ENCODE measurements at regions of chr22 and their contacts with region 1.

Region 1: GRCh38 chr22:17785185-17786184 is 11.2 kb upstream of the BID start:
- DNase-seq: peak; percentile 76
- ATAC-seq: peak; percentile 47
- H3K4me3 ChIP-seq: no peak overlapping the region
- H3K4me3 Mint-ChIP-seq: no peak overlapping the region
- H3K27ac ChIP-seq: peak overlapping the region in 1 of 2 donors; percentile 50
- H3K27ac Mint-ChIP-seq: peak overlapping the region; percentile 37
- H3K4me1 ChIP-seq: peaks cover 11 to 16% of the 10 kb centered on the region in 2 donors
- H3K4me1 Mint-ChIP-seq: peaks cover 22% of the 10 kb centered on the region
- H3K27me3 ChIP-seq: no peaks in the 10 kb centered on the region
- H3K27me3 Mint-ChIP-seq: no peaks in the 10 kb centered on the region
- CTCF ChIP-seq: peak; percentile 77

Region 2: GRCh38 chr22:17712441-17712840 is 73.0 kb before region 1 on chr22:
- CTCF ChIA-PET with region 1: no interaction called
- POLR2A ChIA-PET with region 1: no interaction called
- intact Hi-C with region 1: no loop called
- DNase-seq: no peak
- ATAC-seq: no peak
- H3K4me3 ChIP-seq: no peak overlapping the region
- H3K4me3 Mint-ChIP-seq: no peak overlapping the region
- H3K27ac ChIP-seq: no peak overlapping the region
- H3K27ac Mint-ChIP-seq: no peak overlapping the region
- H3K4me1 ChIP-seq: no peaks in the 10 kb centered on the region
- H3K4me1 Mint-ChIP-seq: peaks cover 4% of the 10 kb centered on the region
- H3K27me3 ChIP-seq: no peaks in the 10 kb centered on the region
- H3K27me3 Mint-ChIP-seq: no peaks in the 10 kb centered on the region
- CTCF ChIP-seq: no peak

Region 3: DNA sequence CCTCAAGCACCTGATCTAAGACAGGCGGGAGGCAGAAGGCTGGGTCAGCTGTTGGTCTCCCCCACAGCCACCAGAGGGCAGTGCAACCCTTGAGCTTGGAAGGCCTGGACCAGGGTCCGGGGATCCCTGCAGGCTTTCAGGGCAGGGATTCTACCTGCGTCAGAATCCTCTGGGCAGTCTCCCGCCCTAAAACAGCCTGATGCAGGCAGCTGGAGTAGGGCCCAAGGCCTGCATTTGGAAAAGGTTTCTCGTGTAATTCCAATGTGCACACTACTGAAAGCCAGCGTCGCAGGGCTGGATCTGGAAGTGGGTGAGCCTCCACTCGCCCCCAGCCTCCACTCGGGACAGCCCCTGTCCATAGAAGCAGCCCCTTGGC is 43.0 kb before region 1 on chr22:
- CTCF ChIA-PET with region 1: interaction called, 109 read pairs
- POLR2A ChIA-PET with region 1: interaction called, 3 read pairs
- intact Hi-C with region 1: loop called (anchors 1 kb)
- DNase-seq: peak; percentile 85
- ATAC-seq: peak; percentile 94
- H3K4me3 ChIP-seq: no peak overlapping the region
- H3K4me3 Mint-ChIP-seq: no peak overlapping the region
- H3K27ac ChIP-seq: no peak overlapping the region
- H3K27ac Mint-ChIP-seq: peak overlapping the region; percentile 26
- H3K4me1 ChIP-seq: peaks cover 0 to 6% of the 10 kb centered on the region in 2 donors
- H3K4me1 Mint-ChIP-seq: peaks cover 8% of the 10 kb centered on the region
- H3K27me3 ChIP-seq: no peaks in the 10 kb centered on the region
- H3K27me3 Mint-ChIP-seq: no peaks in the 10 kb centered on the region
- CTCF ChIP-seq: peak; percentile 75

Region 4: DNA sequence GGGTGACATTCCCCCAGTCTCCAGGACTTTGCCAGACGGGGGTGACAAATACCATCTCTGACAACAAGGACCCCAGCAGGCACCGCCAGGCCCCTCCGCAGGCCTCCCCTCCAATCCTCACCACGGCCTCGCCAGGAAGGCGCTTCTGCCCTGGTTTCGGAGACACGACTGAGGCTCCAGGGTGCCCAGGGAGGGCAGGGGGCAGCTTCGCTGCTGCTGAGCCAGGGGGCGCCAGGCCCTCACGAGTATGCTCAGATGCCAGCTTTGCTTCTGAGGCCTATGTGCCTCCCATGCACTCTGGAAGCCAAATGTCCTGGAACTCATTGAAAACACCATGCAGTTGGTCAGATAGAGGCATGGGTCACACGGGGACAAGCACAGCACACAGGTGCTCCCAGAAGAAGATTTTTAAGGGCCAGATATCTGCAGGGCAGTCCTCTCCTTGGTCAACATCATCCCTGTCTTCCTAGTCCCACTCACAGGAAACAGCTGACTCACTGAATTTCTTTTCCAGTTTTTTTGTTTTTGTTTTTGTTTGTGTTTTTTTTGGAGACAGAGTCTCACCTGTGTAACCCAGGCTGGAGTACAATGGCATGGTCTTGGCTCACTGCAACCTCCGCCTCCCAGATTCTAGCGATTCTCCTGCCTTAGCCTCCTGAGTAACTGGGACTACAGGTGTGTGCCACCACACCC is 31.1 kb before region 1 on chr22:
- CTCF ChIA-PET with region 1: interaction called, 30 read pairs
- POLR2A ChIA-PET with region 1: no interaction called
- intact Hi-C with region 1: loop called (anchors 1 kb)
- DNase-seq: peak; percentile 42
- ATAC-seq: peak; percentile 43
- H3K4me3 ChIP-seq: no peak overlapping the region
- H3K4me3 Mint-ChIP-seq: no peak overlapping the region
- H3K27ac ChIP-seq: no peak overlapping the region
- H3K27ac Mint-ChIP-seq: no peak overlapping the region
- H3K4me1 ChIP-seq: no peaks in the 10 kb centered on the region
- H3K4me1 Mint-ChIP-seq: no peaks in the 10 kb centered on the region
- H3K27me3 ChIP-seq: no peaks in the 10 kb centered on the region
- H3K27me3 Mint-ChIP-seq: no peaks in the 10 kb centered on the region
- CTCF ChIP-seq: peak; percentile 35

Region 5: GRCh38 chr22:17767233-17768065 is 18.0 kb before region 1 on chr22:
- CTCF ChIA-PET with region 1: interaction called, 73 read pairs
- POLR2A ChIA-PET with region 1: interaction called, 14 read pairs
- intact Hi-C with region 1: no loop called
- DNase-seq: no peak
- ATAC-seq: peak; percentile 28
- H3K4me3 ChIP-seq: no peak overlapping the region
- H3K4me3 Mint-ChIP-seq: peak overlapping the region; percentile 55
- H3K27ac ChIP-seq: no peak overlapping the region
- H3K27ac Mint-ChIP-seq: peak overlapping the region; percentile 75
- H3K4me1 ChIP-seq: peaks cover 33 to 47% of the 10 kb centered on the region in 2 donors
- H3K4me1 Mint-ChIP-seq: peaks cover 47% of the 10 kb centered on the region
- H3K27me3 ChIP-seq: no peaks in the 10 kb centered on the region
- H3K27me3 Mint-ChIP-seq: no peaks in the 10 kb centered on the region
- CTCF ChIP-seq: no peak

Region 6: DNA sequence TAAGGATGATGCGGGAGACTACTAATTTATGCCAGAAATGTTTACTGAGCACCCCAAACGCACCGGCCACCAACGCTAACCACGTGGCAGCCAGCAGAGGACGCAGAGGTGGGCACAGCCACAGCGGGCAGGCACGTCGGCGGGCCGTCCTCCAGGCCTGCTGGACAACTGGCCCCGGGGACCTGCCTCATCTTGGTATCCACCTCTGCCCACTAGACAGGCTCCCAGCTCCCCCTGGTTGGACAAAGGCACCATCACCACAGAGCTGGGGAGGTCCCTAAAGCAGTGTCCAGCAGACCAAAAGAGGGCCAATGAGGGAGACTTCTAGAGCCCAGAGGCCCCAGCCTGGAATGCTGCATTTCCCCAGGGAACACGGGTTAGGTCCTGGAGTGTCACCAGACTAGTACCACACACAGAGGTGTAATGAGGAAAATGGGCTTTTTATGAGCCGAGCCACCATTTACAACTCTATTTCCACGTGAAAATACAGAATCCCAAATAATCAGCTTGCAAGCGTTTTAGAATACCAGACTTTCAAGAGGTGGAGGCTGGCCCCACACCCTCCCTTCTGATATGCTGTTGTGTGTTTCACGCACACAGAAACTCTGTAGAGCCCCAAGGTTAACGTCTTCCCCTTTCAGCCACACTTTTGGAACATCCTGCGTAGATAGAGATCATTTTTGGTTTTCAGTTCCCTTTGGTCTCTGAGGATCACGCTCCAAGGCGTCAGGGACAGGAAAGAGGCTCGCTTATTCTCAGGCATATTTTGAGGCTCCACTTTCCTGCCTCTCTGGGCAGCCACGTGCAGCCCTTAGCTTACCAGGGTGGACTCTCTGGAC is 12.5 kb after region 1 on chr22:
- CTCF ChIA-PET with region 1: interaction called, 31 read pairs
- POLR2A ChIA-PET with region 1: interaction called, 8 read pairs
- intact Hi-C with region 1: loop called (anchors 1 kb)
- DNase-seq: peak; percentile 90
- ATAC-seq: peak; percentile 58
- H3K4me3 ChIP-seq: no peak overlapping the region
- H3K4me3 Mint-ChIP-seq: peak overlapping the region; percentile 73
- H3K27ac ChIP-seq: peak overlapping the region; percentile 63 to 76
- H3K27ac Mint-ChIP-seq: peak overlapping the region; percentile 93
- H3K4me1 ChIP-seq: peaks cover 56 to 73% of the 10 kb centered on the region in 2 donors
- H3K4me1 Mint-ChIP-seq: peaks cover 72% of the 10 kb centered on the region
- H3K27me3 ChIP-seq: no peaks in the 10 kb centered on the region
- H3K27me3 Mint-ChIP-seq: no peaks in the 10 kb centered on the region
- CTCF ChIP-seq: no peak

Region 7: GRCh38 chr22:17945888-17946648 is 160.6 kb after region 1 on chr22:
- CTCF ChIA-PET with region 1: no interaction called
- POLR2A ChIA-PET with region 1: no interaction called
- intact Hi-C with region 1: no loop called
- DNase-seq: no peak
- ATAC-seq: peak; percentile 28
- H3K4me3 ChIP-seq: peak overlapping the region in 1 of 5 experiments; percentile 33
- H3K4me3 Mint-ChIP-seq: peak overlapping the region; percentile 5
- H3K27ac ChIP-seq: peak overlapping the region in 1 of 2 donors; percentile 61
- H3K27ac Mint-ChIP-seq: peak overlapping the region; percentile 47
- H3K4me1 ChIP-seq: peaks cover 61 to 85% of the 10 kb centered on the region in 2 donors
- H3K4me1 Mint-ChIP-seq: peaks cover 92% of the 10 kb centered on the region
- H3K27me3 ChIP-seq: no peaks in the 10 kb centered on the region
- H3K27me3 Mint-ChIP-seq: no peaks in the 10 kb centered on the region
- CTCF ChIP-seq: no peak